ENCODE measurements at regions of chr5 and their contacts with region 1.

Region 1: DNA sequence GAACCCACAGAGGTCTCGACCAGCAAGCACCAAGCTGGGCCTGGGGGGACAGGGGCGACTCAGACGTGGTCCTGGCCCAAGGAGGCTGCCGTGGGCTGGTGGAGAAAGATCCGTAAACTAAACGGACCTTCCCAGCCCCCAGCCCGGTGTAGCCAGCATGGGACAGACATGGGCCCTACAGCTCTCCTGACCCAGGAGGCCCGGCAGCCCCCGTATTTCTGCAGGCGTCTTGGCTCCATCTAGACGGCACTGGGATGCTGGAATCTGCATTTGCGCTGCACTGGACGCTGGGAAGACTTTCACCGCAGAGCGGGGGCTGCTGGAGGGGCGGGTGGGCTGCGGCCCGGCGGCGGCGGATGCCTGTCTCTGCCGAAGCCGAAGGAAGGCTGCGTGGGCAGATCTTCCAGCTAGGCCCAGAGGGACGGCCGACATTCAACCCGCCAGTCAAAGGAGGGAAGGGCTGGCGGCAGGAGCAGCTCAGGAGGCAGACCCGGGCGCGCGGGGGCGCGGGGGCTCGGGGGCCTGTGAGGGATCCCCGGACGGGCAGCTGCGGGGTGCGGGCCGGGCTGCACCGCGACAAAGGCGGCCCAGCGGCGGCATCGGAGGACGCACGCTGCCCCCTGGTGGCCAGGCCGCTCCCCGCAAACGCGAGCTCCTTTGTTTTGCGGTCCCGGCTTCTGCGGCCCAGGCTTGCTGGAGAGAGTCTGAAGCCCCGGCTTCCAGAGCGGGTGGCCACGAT is 266.2 kb downstream of the NSG2 start:
- DNase-seq: peak; percentile 40 to 82 (median 74)
- H3K4me3 ChIP-seq: peak overlapping the region in 3 of 4 donors; percentile 18 to 55 (median 27)
- H3K27ac ChIP-seq: no peak overlapping the region
- H3K4me1 ChIP-seq: peaks cover 0 to 5% of the 10 kb centered on the region in 2 donors
- H3K27me3 ChIP-seq: no peaks in the 10 kb centered on the region
- CTCF ChIP-seq: peak; percentile 51 to 97 (median 78)
- POLR2A ChIP-seq: no peak

Region 2: DNA sequence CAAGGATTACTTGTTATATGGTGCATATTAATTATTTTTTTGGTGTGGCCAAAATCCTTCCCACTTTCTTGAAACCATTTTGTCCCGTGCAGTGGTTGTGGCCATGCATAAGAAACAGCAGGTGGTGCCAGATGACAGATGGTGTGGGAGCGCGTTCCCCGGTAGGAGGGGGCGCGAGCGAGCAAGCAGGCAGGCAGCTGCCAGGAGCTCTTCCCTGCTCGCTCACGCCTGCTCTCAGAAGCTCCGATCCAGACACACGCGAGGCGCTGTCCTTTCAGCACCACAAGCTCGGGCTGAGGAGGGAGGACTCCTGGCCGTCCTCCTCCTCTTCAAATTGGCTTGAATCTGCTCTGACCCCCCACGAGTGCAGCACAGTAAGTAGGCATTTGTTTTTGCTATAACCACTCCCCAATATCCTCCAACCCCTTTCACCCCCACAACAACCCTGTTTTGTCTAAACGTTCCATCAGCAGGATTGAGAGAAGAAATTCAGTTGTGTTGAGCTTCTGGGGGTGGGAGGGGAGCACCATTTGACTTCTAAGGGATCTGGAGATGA is 266.2 kb before region 1 on chr5 and contains the start of gene NSG2:
- intact Hi-C with region 1: loop called (anchors 2 to 5 kb)
- DNase-seq: peak; percentile 86 to 94 (median 89)
- H3K4me3 ChIP-seq: no peak within 1 kb of the TSS
- H3K27ac ChIP-seq: no peak within 1 kb of the TSS
- H3K4me1 ChIP-seq: no peaks in the 10 kb centered on the region
- H3K27me3 ChIP-seq: no peaks in the 10 kb centered on the region
- CTCF ChIP-seq: peak; percentile 20 to 83 (median 74)
- POLR2A ChIP-seq: no peak
- total RNA-seq, gene NSG2: 0.25 to 40.9 (median 4.5) TPM in 8 of 9 donors, not detected in the other